Heart left ventricle (tissue), 16 donors: ENCODE measurements at regions of chrX and their contacts with region 1.

Region 1: GRCh38 chrX:17689971-17690409 is 47.3 kb upstream of the SCML1 start:
- DNase-seq: peak in 2 of 5 donors; percentile 37 to 50
- ATAC-seq: peak in 3 of 4 donors; percentile 76 to 80 (median 77)
- H3K4me3 ChIP-seq: no peak overlapping the region
- H3K27ac ChIP-seq: no peak overlapping the region
- H3K4me1 ChIP-seq: peaks cover 0 to 4% (median 0%) of the 10 kb centered on the region in 12 donors
- H3K27me3 ChIP-seq: peaks cover 0 to 21% (median 0%) of the 10 kb centered on the region in 9 donors
- CTCF ChIP-seq: peak; percentile 52 to 75 (median 63)
- POLR2A ChIP-seq: no peak

Region 2: DNA sequence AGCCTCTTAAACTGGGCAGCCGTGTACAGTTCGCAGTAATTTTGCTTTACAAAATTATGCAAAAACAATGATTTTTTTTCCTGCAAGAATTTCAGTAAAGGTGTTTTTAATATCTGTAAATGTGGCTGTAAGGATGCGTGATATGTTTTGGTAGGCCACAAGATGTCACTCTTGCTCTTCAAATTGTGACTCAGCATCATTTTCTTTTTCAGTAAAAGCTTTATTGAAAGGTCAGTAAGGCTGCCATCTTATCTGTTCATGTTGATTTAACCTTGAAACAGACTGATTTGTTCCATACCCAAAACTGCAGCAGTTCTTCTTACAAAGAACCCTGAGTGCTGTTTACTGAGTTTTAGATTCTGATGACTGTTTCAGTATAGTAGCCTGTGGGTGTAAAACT is 863.8 kb before region 1 on chrX:
- intact Hi-C with region 1: loop called in 1 of 10 experiments (anchors 5 kb)
- DNase-seq: no peak
- ATAC-seq: peak in 2 of 4 donors; percentile 35 to 39
- H3K4me3 ChIP-seq: no peak overlapping the region
- H3K27ac ChIP-seq: no peak overlapping the region
- H3K4me1 ChIP-seq: peaks cover 0 to 12% (median 2%) of the 10 kb centered on the region in 12 donors
- H3K27me3 ChIP-seq: no peaks in the 10 kb centered on the region
- CTCF ChIP-seq: peak in 11 of 12 donors; percentile 32 to 63 (median 50)
- POLR2A ChIP-seq: no peak

Region 3: GRCh38 chrX:17242470-17242869 is 447.5 kb before region 1 on chrX:
- intact Hi-C with region 1: loop called (anchors 2 to 5 kb)
- DNase-seq: peak in 2 of 5 donors; percentile 7 to 18
- ATAC-seq: peak in 1 of 4 donors; percentile 55
- H3K4me3 ChIP-seq: no peak overlapping the region
- H3K27ac ChIP-seq: no peak overlapping the region
- H3K4me1 ChIP-seq: no peaks in the 10 kb centered on the region
- H3K27me3 ChIP-seq: peaks cover 0 to 4% (median 0%) of the 10 kb centered on the region in 9 donors
- CTCF ChIP-seq: peak; percentile 56 to 78 (median 70)
- POLR2A ChIP-seq: no peak

Region 4: DNA sequence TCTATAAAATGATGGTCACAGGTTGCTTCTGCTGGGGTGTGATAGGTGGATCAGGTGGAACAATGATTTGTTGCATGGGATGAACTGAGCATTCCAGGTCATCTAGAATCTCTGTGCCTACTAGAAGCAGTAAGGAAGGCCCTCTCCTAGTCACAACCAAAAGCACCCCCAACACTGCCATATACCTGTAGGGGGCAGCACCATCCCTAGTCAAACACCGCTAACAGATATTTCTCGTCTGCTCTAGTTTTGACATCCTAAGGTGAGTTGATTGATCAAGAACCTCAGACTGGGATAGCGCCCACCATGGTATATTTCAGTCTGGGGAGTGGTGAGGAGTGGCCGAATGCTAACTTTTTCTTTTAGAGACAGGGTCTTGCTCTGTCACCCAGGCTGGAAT is 154.8 kb before region 1 on chrX:
- intact Hi-C with region 1: loop called in 9 of 10 experiments (anchors 2 to 10 kb)
- DNase-seq: no peak
- ATAC-seq: no peak
- H3K4me3 ChIP-seq: no peak overlapping the region
- H3K27ac ChIP-seq: no peak overlapping the region
- H3K4me1 ChIP-seq: no peaks in the 10 kb centered on the region
- H3K27me3 ChIP-seq: peaks cover 0 to 15% (median 0%) of the 10 kb centered on the region in 9 donors
- CTCF ChIP-seq: peak; percentile 15 to 50 (median 39)
- POLR2A ChIP-seq: no peak

Region 5: DNA sequence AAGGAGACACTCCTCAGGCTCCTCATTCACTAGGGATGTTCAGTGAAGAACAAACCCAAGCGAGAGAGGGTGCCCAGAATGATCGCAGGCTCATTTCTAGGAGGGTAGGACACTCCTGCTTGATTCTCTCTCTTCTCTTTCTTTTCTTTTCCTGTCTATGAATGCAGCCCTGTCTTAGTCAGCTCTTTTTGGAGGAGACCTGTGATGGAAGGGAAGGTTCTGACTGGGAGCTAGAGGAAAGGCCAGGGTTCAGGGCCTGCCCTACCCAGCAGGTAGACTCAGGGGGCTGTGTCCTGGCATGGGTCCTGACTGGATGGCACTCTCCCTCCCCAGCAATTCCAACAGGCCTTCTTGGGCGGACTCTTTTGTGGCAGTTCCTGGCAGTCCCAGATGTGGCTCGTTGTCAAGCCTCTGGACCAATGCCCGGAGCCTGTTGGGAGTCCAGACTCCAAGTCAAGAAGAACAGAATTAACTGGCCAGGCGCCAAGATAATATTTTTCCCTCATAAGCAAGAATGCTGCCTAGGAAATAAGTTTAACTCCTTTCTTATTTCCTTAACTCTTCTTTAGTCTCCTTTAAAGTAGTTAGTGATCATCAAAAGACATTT is 92.1 kb before region 1 on chrX:
- intact Hi-C with region 1: loop called in 6 of 10 experiments (anchors 5 to 10 kb)
- DNase-seq: peak; percentile 74 to 88 (median 83)
- ATAC-seq: peak in 3 of 4 donors; percentile 72 to 78 (median 74)
- H3K4me3 ChIP-seq: no peak overlapping the region
- H3K27ac ChIP-seq: peak overlapping the region in 10 of 12 donors; percentile 9 to 72 (median 48)
- H3K4me1 ChIP-seq: peaks cover 0 to 22% (median 7%) of the 10 kb centered on the region in 12 donors
- H3K27me3 ChIP-seq: peaks cover 0 to 4% (median 0%) of the 10 kb centered on the region in 9 donors
- CTCF ChIP-seq: no peak
- POLR2A ChIP-seq: no peak